Dorsolateral prefrontal cortex (tissue), 120 donors: ENCODE measurements at regions of chr2 and their contacts with region 1.

Region 1: DNA sequence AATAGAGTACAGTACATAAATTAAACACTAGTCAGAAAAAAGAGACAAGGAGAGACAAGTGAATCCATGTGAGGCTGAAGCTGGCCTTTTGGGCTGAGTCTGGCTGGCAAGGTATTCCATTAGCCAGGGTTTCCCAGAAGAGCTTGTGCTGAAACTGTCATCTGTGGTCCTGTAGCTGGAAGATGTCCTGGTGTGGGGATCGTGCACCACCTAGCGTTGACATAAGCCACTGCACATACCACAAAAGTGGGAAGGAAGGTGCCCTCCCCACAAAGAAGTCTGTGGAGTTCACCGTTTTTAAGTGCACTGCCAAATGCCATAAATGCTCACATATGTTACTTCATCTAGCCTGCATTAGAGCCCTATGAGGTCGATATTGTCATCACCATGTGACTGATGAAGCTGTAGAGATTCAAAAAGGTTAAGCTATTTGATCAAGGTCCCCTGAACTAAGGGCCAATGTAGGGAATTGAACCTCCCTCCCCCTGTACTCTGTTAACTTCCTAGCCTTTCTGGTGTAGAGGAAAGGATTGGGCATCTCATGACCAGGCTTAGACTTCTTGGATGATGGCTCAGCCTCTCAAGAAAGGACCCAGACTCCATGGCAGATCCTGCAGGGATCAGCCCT is 31.9 kb upstream of the GALNT14 start:
- DNase-seq: peak; percentile 49 to 81 (median 66)
- H3K4me3 ChIP-seq: no peak overlapping the region
- H3K27ac ChIP-seq: no peak overlapping the region
- H3K27me3 ChIP-seq: peaks cover 0 to 17% (median 0%) of the 10 kb centered on the region in 45 donors
- CTCF ChIP-seq: peak; percentile 68 to 97 (median 93)

Region 2: DNA sequence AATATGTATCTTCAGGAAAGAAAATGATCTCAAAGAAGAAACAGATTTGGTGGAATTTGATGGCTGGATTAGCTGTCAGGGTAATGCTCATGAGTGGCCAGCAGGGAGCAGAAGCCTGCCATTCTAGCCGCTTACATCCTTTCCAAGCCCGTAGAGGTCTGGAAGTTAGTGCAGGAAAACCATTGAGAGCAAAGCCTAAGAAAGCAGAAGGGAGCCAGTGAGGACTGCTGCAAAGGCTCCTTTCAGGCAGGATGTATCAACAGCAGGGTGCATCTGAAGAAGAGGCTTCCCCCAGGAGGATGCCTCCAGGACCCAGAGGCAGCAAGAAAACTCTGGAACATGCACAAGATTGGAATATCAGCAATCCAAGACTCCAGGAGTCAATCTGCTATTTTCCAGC is 961.7 kb before region 1 on chr2:
- intact Hi-C with region 1: loop called in 1 of 2 experiments (anchors 5 kb)
- DNase-seq: peak in 9 of 10 donors; percentile 49 to 73 (median 65)
- H3K4me3 ChIP-seq: no peak overlapping the region
- H3K27ac ChIP-seq: peak overlapping the region in 1 of 59 donors; percentile 6
- H3K27me3 ChIP-seq: no peaks in the 10 kb centered on the region
- CTCF ChIP-seq: peak; percentile 74 to 98 (median 91)

Region 3: DNA sequence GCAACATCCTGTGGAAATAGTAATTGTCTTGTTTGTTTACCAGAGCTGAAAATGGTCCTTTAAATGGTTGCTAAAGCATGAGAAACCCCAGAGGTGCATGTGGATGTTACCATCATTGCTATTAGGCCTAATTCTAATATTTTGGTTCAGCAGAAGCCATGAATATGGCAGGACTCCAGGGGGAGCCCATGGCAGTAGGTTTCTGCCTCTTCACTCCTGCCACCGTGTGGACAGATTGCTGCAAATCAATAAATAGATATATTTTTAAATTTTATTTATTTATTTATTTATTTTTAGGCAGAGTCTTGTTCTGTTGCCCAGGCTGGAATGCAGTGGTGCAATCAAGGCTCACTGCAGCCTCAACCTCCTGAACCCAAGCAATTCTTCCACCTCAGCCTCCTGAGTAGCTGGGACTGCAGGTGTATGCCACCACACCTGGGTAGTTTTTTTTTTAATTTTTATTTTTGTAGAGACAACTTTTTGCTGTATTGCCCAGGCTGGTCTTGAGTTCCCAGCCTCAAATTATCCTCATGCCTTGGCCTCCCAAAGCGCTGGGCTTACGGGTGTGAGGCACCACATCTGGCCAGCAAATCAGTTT is 308.0 kb before region 1 on chr2:
- intact Hi-C with region 1: loop called in 1 of 2 experiments (anchors 5 kb)
- DNase-seq: peak in 7 of 10 donors; percentile 25 to 72 (median 55)
- H3K4me3 ChIP-seq: no peak overlapping the region
- H3K27ac ChIP-seq: peak overlapping the region in 26 of 59 donors; percentile 2 to 72 (median 30)
- H3K27me3 ChIP-seq: no peaks in the 10 kb centered on the region
- CTCF ChIP-seq: peak; percentile 55 to 94 (median 82)